Heart left ventricle (tissue), 16 donors: ENCODE measurements at regions of chr4 and their contacts with region 1.

Region 1: GRCh38 chr4:173505924-173506518 is 24.0 kb downstream of the HAND2 start:
- DNase-seq: peak; percentile 64 to 76 (median 73)
- ATAC-seq: peak; percentile 48 to 75 (median 68)
- H3K4me3 ChIP-seq: peak overlapping the region in 10 of 12 donors; percentile 14 to 61 (median 46)
- H3K27ac ChIP-seq: peak overlapping the region; percentile 38 to 94 (median 83)
- H3K4me1 ChIP-seq: peaks cover 0 to 40% (median 23%) of the 10 kb centered on the region in 12 donors
- H3K27me3 ChIP-seq: peaks cover 0 to 95% (median 10%) of the 10 kb centered on the region in 9 donors
- CTCF ChIP-seq: peak; percentile 49 to 82 (median 72)
- POLR2A ChIP-seq: no peak

Region 2: DNA sequence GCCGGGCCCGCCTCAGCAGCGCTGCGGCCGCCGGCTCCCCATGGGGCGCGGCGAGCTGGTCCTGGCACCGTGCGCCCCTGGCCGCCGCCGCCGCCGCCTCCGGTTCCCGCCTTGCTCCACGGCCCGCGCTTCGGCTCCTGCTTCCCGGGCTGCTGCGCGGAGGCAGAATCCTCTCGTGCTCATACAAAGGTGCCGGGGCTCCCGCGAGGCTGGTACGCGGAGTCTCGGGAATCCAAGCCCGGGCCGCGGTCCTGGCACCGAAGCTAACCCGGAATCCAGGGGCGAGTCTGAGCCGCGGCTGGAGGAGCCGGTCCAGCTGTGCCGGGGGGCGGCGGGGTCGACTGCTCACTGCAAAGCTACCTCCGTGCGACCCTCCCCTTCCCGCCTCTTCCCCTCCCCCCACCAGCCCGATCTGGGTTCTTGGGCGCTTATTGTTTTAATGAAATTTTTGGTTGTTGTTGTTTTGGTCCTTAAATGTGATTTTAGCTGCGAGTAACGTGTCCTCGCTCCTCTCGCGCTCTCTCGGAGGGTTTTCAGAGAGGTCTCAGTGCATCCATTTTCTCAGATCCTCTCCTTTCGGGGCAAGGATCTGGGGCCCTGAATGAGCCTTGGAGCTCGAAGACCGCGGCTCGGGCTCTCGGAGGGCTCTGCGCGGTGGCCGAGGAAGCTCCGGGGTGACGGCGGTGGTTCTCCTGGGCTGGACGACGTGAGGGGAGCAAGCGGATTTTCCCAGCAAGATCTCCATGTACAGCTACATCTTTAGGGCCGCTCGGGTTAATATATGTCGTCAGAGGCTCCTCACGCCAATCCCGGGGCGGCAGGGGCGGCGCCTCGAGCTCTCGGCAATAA is 23.7 kb after region 1 on chr4 and contains the start of gene HAND2:
- intact Hi-C with region 1: loop called in 1 of 10 experiments (anchors 2 kb)
- DNase-seq: peak; percentile 82 to 92 (median 87)
- ATAC-seq: peak; percentile 70 to 76 (median 74)
- H3K4me3 ChIP-seq: peak within 1 kb of the TSS; percentile 60 to 95 (median 82)
- H3K27ac ChIP-seq: peak within 1 kb of the TSS; percentile 83 to 99 (median 96)
- H3K4me1 ChIP-seq: peaks cover 0 to 7% (median 1%) of the 10 kb centered on the region in 12 donors
- H3K27me3 ChIP-seq: peaks cover 0 to 96% (median 11%) of the 10 kb centered on the region in 9 donors
- CTCF ChIP-seq: no peak
- POLR2A ChIP-seq: peak; percentile 87 to 97
- total RNA-seq, gene HAND2: 89.3 to 188 (median 129) TPM

Region 3: DNA sequence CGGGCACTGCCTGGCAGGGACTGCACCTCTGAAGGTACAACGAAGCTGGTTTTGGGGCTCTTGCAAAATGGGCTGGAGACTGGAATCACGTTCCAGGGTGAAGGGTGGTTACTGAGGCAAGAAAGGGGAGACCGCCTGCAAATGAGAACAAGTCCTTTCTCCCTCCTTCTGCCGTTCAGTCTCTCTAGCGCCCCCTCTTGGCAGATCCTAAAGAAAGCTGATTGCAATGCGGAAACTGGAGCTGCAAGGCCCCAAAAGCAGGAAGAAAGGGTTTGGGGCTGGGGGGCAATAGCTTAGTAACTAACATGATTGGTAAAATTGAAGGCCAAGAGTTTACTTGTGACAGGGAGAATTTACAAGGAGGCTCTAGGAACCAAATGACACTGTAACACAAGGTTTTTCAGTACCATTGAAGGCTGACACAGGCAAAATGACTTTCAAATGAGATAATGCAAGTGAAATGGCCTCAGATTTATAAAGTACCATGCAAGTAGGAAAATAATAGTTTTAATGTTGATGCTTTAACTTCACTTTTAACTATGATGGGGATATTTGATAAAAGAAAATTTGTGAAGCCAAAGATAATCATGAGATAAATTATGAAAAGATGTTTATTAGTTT is 246.7 kb after region 1 on chr4:
- intact Hi-C with region 1: loop called (anchors 2 to 10 kb)
- DNase-seq: no peak
- ATAC-seq: no peak
- H3K4me3 ChIP-seq: no peak overlapping the region
- H3K27ac ChIP-seq: no peak overlapping the region
- H3K4me1 ChIP-seq: peaks cover 0 to 6% (median 0%) of the 10 kb centered on the region in 12 donors
- H3K27me3 ChIP-seq: no peaks in the 10 kb centered on the region
- CTCF ChIP-seq: peak in 10 of 12 donors; percentile 11 to 50 (median 42)
- POLR2A ChIP-seq: no peak

Region 4: DNA sequence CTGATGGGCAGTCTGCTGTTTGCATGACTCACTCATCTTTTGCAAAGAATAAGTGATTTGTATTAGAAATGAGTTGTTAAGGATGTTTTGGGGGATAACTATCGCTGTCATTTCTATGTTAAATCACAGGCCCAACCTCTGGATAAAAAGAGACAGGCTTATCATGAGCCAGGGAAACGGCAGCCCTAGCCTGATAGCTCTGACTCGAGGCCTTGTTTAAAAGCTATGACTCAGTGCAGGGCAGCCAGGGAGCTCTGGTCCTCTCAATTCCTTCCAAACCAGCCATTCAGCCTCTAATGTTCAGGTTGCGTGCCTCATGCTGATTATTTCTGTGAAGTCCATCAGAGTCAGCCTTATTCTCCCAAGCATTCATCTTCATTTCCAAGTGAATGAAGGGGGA is 329.9 kb after region 1 on chr4:
- intact Hi-C with region 1: loop called in 1 of 10 experiments (anchors 10 kb)
- DNase-seq: peak in 4 of 5 donors; percentile 20 to 57 (median 38)
- ATAC-seq: peak; percentile 85 to 96 (median 92)
- H3K4me3 ChIP-seq: no peak overlapping the region
- H3K27ac ChIP-seq: peak overlapping the region in 6 of 12 donors; percentile 11 to 60 (median 30)
- H3K4me1 ChIP-seq: peaks cover 0 to 16% (median 0%) of the 10 kb centered on the region in 12 donors
- H3K27me3 ChIP-seq: no peaks in the 10 kb centered on the region
- CTCF ChIP-seq: no peak
- POLR2A ChIP-seq: no peak

Region 5: GRCh38 chr4:174120446-174121295 is 614.6 kb after region 1 on chr4:
- intact Hi-C with region 1: loop called in 8 of 10 experiments (anchors 2 to 10 kb)
- DNase-seq: peak; percentile 50 to 79 (median 53)
- ATAC-seq: peak; percentile 50 to 92 (median 80)
- H3K4me3 ChIP-seq: peak overlapping the region; percentile 16 to 59 (median 40)
- H3K27ac ChIP-seq: peak overlapping the region in 7 of 12 donors; percentile 6 to 74 (median 32)
- H3K4me1 ChIP-seq: peaks cover 0 to 22% (median 2%) of the 10 kb centered on the region in 12 donors
- H3K27me3 ChIP-seq: no peaks in the 10 kb centered on the region
- CTCF ChIP-seq: peak; percentile 28 to 64 (median 54)
- POLR2A ChIP-seq: no peak

Region 6: GRCh38 chr4:174318829-174319764 is 813.1 kb after region 1 on chr4:
- intact Hi-C with region 1: loop called in 2 of 10 experiments (anchors 5 to 10 kb)
- DNase-seq: no peak
- ATAC-seq: no peak
- H3K4me3 ChIP-seq: no peak overlapping the region
- H3K27ac ChIP-seq: no peak overlapping the region
- H3K4me1 ChIP-seq: no peaks in the 10 kb centered on the region
- H3K27me3 ChIP-seq: no peaks in the 10 kb centered on the region
- CTCF ChIP-seq: peak; percentile 61 to 79 (median 68)
- POLR2A ChIP-seq: no peak